Right lobe of liver (tissue), 6 donors: ENCODE measurements at regions of chr6 and their contacts with region 1.

Region 1: GRCh38 chr6:26223650-26224546 is 136.7 kb downstream of the HFE start:
- DNase-seq: peak; percentile 54 to 76 (median 73)
- ATAC-seq: peak; percentile 93 to 96 (median 94)
- H3K4me3 ChIP-seq: peak overlapping the region; percentile 42 to 57 (median 53)
- H3K27ac ChIP-seq: peak overlapping the region; percentile 61 to 92 (median 72)
- H3K4me1 ChIP-seq: no peaks in the 10 kb centered on the region
- H3K27me3 ChIP-seq: no peaks in the 10 kb centered on the region
- CTCF ChIP-seq: no peak
- POLR2A ChIP-seq: peak; percentile 72

Region 2: DNA sequence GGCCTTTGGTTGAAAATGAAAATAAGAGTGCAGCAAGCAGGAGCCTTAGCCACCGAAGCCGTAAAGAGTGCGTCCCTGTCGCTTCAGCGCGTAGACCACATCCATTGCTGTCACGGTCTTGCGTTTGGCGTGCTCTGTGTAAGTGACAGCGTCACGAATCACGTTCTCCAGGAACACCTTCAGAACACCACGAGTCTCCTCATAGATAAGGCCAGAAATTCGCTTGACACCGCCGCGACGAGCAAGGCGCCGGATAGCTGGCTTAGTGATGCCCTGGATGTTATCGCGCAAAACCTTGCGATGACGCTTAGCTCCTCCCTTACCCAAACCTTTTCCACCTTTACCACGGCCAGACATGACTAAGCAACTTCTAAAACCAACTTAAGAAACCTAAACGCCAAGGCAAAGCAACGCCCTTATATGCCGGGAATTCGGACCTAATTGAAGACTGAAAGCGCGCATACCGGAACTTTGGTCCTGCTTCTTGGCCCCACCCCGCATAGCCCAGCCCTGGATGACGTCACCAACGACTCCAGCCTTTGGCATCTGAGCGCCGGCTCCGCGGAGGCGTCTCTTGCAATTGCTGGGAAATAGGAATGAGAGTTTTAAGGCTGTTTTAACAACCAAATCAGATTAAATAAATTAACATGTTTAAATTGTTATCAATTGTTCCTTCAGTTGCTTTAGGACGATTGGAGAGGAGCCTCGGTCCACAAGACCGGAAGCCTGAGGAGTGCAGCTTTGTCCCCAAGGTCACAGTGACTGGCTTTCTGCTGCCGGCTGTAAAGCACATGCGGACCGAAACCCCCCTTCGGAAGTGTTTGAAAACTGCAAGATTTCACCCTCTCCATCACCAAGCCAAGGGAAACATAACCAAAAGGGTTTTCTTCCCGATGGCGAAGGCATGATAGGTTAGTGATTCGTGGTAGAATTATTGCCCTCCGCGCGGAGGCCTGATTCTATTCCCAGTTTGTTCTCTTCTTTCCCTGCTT is 61.5 kb after region 1 on chr6:
- intact Hi-C with region 1: loop called in 1 of 2 experiments (anchors 10 kb)
- DNase-seq: peak; percentile 94 to 96 (median 95)
- ATAC-seq: peak; percentile 90 to 92 (median 92)
- H3K4me3 ChIP-seq: peak overlapping the region; percentile 41 to 64 (median 61)
- H3K27ac ChIP-seq: peak overlapping the region; percentile 67 to 87 (median 74)
- H3K4me1 ChIP-seq: no peaks in the 10 kb centered on the region
- H3K27me3 ChIP-seq: no peaks in the 10 kb centered on the region
- CTCF ChIP-seq: no peak
- POLR2A ChIP-seq: peak; percentile 68

Region 3: DNA sequence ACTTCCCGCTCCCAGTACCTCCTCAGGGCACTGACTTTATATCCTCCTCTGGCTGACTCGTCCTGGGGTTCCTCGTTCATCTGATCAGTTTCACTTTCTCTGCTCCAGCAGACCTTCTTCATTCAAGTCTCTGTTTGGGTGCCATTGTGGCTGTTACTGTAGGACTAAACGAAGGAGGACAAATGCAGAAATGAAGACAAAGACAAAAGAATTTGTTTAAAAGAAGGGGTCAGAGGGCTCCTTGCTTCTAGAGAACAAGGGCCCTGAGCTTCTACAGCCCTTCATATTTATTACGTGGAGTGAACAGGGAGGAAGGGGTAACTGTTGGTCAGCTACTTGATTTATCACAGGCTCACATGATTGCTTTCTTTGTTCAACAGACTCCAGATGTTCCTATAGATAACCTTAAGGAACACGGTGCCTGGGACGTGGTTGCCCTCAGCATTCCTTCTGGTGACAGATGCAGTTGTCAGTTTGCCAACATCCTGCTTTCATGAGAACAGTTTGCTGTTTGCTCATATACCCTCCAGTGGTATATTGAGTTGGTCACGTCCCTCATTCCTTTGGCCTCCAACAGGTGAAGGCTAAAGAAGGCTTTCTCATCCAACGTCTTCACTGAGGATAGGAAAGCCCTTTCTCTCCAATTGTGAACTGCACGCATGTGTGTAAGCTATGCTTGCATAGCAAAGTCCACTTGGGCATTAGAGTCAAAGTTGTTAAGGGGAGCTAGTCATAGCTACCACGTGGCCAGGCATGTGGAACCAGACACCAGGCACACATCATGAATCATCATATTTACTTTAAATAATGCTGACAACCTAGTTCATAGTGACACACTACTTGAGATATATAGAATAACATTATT is 72.0 kb after region 1 on chr6:
- intact Hi-C with region 1: no loop called
- DNase-seq: no peak
- ATAC-seq: peak in 3 of 4 donors; percentile 41 to 73 (median 72)
- H3K4me3 ChIP-seq: no peak overlapping the region
- H3K27ac ChIP-seq: no peak overlapping the region
- H3K4me1 ChIP-seq: no peaks in the 10 kb centered on the region
- H3K27me3 ChIP-seq: no peaks in the 10 kb centered on the region
- CTCF ChIP-seq: no peak
- POLR2A ChIP-seq: no peak

Region 4: GRCh38 chr6:26607434-26608230 is 383.7 kb after region 1 on chr6:
- intact Hi-C with region 1: no loop called
- DNase-seq: no peak
- ATAC-seq: peak; percentile 95 to 99 (median 98)
- H3K4me3 ChIP-seq: peak overlapping the region; percentile 17 to 41 (median 25)
- H3K27ac ChIP-seq: no peak overlapping the region
- H3K4me1 ChIP-seq: no peaks in the 10 kb centered on the region
- H3K27me3 ChIP-seq: no peaks in the 10 kb centered on the region
- CTCF ChIP-seq: peak; percentile 72 to 85 (median 78)
- POLR2A ChIP-seq: no peak